ENCODE measurements at regions of chr9 and their contacts with region 1.

Region 1: DNA sequence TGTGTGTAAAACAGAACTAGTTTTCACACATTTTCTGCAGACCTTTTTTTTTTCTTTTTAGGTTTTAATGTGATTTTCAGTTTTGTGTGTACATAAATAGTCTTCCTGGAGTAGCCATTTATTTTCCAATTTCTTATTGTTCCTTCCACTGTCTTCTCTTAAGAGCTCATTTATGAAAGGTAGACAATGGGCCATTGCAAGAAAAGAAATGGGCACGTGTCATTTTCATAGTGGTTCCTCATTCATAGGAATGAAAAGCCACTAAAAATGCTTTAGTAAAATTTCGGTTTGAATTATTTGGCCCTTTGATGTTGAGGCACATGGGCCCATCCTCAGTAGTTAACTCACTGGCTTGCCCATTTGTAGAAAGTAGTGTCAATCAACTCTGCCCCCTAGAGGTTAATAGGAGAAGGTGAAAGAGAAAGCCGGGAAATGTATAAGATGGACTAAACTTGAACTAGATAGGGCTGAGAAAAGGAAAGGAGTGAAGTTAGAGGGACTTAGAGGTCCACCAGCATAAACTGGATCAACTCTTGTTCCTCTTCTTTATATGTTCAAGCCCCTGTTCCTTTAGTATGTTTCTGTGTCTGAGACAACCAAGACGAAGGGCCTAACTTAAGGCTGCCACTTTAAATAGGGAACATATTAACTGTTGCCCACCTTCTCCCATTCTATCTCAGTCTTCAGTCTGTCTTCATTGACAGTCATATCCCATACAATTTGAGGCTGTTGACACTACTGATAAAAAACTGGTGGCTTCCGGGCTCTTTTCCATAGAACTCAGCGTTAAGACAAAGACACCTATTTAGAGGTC is 72.6 kb downstream of the SMARCA2 start:
- DNase-seq: peak; percentile 61
- CTCF ChIP-seq: peak; percentile 20

Region 2: GRCh38 chr9:2008372-2008771 is 79.3 kb before region 1 on chr9:
- CTCF ChIA-PET with region 1: no interaction called
- POLR2A ChIA-PET with region 1: no interaction called
- DNase-seq: no peak
- CTCF ChIP-seq: no peak

Region 3: DNA sequence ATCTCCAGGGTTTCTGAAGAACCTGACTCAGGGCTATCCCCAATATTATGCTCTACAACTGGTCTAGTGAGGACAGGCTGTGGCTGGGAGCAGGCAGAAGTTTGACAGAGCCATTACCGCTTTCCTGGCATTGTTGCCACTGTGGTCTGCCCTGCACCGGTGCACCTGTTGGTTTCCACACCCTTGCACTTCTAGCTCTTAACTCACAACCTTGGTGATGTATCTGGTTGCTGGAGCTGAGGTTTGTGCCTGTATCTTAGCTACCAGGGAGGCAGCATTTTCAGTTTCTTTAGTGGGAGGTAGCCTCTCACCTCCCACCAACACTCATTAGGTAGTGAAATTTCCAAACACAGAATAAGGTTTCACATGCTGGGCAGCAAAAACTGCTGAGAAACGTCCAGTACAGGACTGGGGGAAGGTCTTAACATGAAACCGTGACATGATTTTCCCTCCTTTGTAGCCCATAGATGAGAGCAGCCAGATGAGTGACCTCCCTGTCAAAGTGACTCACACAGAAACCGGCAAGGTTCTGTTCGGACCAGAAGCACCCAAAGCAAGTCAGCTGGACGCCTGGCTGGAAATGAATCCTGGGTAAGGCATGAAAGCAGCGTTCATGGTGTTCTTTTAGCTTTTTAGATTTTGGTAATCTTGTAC is 14.8 kb before region 1 on chr9:
- CTCF ChIA-PET with region 1: interaction called, 17 read pairs
- POLR2A ChIA-PET with region 1: no interaction called
- DNase-seq: no peak
- CTCF ChIP-seq: no peak

Region 4: DNA sequence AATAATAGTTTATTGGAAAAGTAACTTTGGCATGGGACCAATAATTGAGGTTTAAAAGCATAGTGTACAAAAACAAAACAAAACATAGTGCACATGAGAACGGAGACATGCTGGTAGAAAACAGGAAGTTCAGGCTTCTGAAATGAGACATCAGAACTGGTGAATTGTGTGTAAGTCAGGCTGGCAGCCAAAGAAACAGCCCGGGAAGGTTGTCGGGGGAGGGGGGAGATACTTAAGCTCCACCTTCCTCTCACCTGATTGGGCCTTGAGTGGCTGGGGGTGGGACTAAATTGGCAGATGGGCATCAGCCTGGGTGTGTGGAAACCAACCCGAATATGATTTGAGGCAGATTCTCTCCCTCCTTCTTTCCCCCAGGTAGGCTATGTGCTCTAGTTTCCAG is 183.7 kb after region 1 on chr9:
- CTCF ChIA-PET with region 1: no interaction called
- POLR2A ChIA-PET with region 1: no interaction called
- DNase-seq: peak; percentile 45
- CTCF ChIP-seq: no peak